A549 (cell line): ENCODE measurements at regions of chr10 and their contacts with region 1.

Region 1: DNA sequence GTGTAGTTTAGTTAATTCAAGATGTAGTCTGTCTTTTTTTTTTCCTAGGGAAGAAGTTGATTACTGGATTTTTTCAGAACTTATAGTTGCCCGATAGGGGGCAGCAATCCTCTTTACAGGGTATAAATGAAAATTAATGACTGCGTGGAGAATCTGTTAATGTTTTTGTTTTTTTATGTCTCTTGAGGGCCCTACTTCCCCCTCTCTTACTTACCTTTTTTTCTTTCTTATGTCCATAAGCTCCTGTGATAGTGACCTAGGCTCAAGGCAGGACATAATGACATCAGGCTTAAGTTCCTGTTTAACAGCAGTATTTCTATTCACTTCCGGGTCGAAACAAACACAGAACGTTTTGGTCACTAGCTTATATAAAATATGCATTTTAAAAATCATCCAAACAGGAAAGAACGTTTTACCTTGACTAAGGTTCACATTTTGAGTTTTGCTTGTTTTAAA is 18.8 kb downstream of the CDC123 start:
- DNase-seq: peak; percentile 40 to 50
- ATAC-seq: peak in 1 of 2 experiments; percentile 47; a peak in 3 of 6 replicates
- H3K4me3 ChIP-seq: no peak overlapping the region
- H3K27ac ChIP-seq: peak overlapping the region in 1 of 2 experiments; percentile 39; a peak in 2 of 6 replicates
- H3K4me1 ChIP-seq: peaks cover 4% of the 10 kb centered on the region; the same call in 2 of the 3 replicates
- CTCF ChIP-seq: peak; percentile 83
- EP300 ChIP-seq: no peak
- POLR2A ChIP-seq: no peak
- RAD21 ChIP-seq: peak; percentile 56 to 65

Region 2: DNA sequence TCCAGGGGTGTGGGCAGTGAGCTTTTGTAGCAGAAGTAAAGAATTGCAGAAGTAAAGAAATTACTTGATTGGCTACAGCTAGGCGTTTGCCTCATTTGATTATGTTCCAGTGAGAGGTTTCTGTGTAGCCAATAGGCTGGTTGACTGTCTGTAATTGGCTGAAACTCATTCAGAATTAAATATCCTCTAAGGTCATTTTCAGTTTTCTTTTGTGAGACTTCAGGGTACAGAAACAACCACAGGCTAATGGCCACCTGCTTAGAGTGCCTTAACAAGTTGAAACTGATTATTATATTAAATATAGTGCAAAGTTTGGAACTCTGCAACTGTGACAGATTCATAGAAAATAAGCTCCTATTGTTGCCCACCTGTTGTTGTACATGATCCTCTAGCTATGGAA is 74.8 kb before region 1 on chr10:
- CTCF ChIA-PET with region 1: no interaction called
- POLR2A ChIA-PET with region 1: no interaction called
- DNase-seq: no peak
- ATAC-seq: no peak
- H3K4me3 ChIP-seq: no peak overlapping the region
- H3K27ac ChIP-seq: no peak overlapping the region
- H3K4me1 ChIP-seq: no peaks in the 10 kb centered on the region
- CTCF ChIP-seq: no peak
- EP300 ChIP-seq: no peak
- POLR2A ChIP-seq: no peak
- RAD21 ChIP-seq: no peak

Region 3: DNA sequence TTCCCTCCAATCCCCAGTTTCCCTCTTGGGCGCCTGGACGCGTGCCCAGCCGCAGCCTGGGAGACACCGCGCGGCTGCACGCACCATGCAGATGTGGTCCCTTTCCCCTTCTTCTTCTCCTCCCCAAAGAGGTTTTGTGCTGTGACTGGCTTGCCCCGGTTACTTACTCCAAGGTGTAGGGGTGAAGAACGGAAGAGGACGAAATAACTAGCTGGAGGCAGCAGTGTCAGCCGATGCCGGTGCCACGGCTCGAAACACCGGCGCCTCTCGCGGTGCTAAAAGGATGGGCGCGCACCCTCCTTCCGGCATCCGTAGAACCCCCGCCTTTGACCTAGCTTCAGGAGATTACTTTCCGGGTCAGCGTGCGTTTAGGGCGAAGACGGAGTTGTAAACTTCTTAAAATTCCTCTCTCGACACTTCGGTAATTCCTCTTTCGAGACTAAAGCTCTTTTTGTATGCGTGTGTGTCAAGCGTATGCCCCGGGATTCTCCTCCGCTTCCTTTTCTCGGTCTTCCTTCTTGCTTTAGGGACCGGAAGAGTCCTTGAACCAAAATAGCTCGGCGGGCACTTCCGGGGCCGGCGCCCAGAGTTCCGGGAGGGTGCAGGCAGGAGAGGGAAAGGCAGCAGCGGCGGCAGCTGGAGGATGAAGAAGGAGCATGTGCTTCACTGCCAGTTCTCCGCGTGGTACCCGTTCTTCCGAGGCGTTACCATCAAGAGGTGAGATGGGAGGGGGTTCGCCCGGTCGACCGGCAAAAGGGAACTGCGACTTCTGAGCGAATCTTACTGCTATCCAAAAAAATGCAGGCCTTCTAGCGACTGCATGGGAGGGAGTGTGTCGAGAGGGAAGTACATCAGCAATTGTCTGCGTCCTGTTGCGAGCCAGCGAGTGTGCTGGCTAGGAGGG is 18.9 kb before region 1 on chr10 and contains the starts of genes CDC123 and NUDT5:
- CTCF ChIA-PET with region 1: interaction called, 61 read pairs
- POLR2A ChIA-PET with region 1: interaction called, 3 read pairs
- DNase-seq: peak; percentile 91 to 93
- ATAC-seq: peak; percentile 97 to 98
- H3K4me3 ChIP-seq: peak within 1 kb of the TSS; percentile 77
- H3K27ac ChIP-seq: peak within 1 kb of the TSS; percentile 87 to 94
- H3K4me1 ChIP-seq: peaks cover 29% of the 10 kb centered on the region
- CTCF ChIP-seq: no peak
- EP300 ChIP-seq: no peak
- POLR2A ChIP-seq: peak; percentile 80
- RAD21 ChIP-seq: no peak; a peak in 1 of 5 replicates
- polyA plus RNA-seq, gene CDC123: 164 and 193 TPM in 2 replicates
- polyA plus RNA-seq, gene NUDT5: 146 and 158 TPM in 2 replicates

Region 4: DNA sequence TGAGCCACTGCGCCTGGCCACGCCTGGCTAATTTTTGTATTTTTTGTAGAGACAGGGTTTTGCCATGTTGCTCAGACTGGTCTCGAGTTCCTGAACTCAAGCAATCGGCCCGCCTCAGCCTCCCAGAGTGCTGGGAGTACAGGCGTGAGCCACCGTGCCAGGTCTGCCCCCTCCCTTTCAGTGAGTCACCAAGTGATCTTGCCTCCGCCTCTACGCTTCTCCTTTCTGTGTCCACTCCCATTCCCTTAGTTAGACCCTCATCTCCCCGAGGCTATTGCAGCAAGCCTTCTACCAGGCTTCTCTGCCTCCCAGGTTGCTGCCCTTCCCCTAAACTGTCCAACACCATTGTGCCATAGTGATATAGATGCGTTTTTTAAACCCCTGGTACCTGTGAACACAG is 14.1 kb after region 1 on chr10:
- CTCF ChIA-PET with region 1: interaction called, 28 read pairs
- POLR2A ChIA-PET with region 1: no interaction called
- DNase-seq: no peak
- ATAC-seq: 0 out of 6 replicates have a peak, but pooled peaks of 1 of the 2 experiments have one; percentile 13
- H3K4me3 ChIP-seq: no peak overlapping the region
- H3K27ac ChIP-seq: no peak overlapping the region
- H3K4me1 ChIP-seq: no peaks in the 10 kb centered on the region; the same call in 2 of the 3 replicates
- CTCF ChIP-seq: no peak
- EP300 ChIP-seq: no peak
- POLR2A ChIP-seq: no peak
- RAD21 ChIP-seq: no peak

Region 5: DNA sequence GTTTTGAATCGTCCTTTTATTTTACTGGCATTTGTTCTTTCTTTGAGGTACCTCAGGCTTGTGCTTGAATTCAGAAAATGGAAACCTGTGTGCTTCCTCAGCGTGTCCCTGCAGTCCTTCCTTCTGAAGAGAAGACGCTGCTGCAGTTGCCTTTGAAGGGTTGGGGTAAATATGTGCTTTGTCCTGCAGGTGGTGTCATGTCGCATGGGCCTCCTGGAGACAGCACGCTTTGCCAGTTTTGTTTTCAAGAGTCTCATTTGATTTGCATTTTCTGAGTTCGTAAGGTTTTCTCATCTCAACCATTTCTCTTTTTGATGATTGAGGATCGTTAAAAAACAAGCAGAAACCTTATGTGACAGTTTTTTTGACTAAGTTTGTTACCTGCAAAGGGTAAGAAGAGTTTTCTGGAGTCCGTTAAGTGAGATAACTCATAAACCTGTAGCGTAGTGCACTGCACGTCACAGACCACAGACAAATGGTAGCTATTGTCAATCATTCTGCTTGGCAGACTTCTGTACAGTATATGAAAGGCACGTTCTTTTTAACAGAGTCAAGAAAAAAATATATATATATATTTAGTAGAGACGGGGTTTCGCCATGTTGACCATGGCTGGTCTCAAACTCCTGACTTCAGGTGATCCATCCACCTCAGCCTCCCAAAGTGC is 38.2 kb after region 1 on chr10:
- CTCF ChIA-PET with region 1: interaction called, 20 read pairs
- POLR2A ChIA-PET with region 1: no interaction called
- DNase-seq: peak; percentile 43 to 65
- ATAC-seq: peak; percentile 82 to 88
- H3K4me3 ChIP-seq: no peak overlapping the region
- H3K27ac ChIP-seq: no peak overlapping the region
- H3K4me1 ChIP-seq: no peaks in the 10 kb centered on the region
- CTCF ChIP-seq: peak; percentile 39; the same call in 2 of the 3 replicates
- EP300 ChIP-seq: no peak
- POLR2A ChIP-seq: no peak
- RAD21 ChIP-seq: peak; percentile 58 to 75

Region 6: GRCh38 chr10:12540341-12540781 is 325.6 kb after region 1 on chr10:
- CTCF ChIA-PET with region 1: no interaction called
- POLR2A ChIA-PET with region 1: no interaction called
- DNase-seq: no peak
- ATAC-seq: no peak
- H3K4me3 ChIP-seq: no peak overlapping the region
- H3K27ac ChIP-seq: no peak overlapping the region
- H3K4me1 ChIP-seq: peaks cover 4% of the 10 kb centered on the region; the same call in 1 of the 3 replicates
- CTCF ChIP-seq: no peak
- EP300 ChIP-seq: no peak
- POLR2A ChIP-seq: no peak
- RAD21 ChIP-seq: no peak

Region 7: GRCh38 chr10:13074561-13075451 is 860.0 kb after region 1 on chr10:
- CTCF ChIA-PET with region 1: interaction called, 14 read pairs
- POLR2A ChIA-PET with region 1: no interaction called
- DNase-seq: peak; percentile 76 to 81
- ATAC-seq: peak; percentile 99 to 100
- H3K4me3 ChIP-seq: no peak overlapping the region
- H3K27ac ChIP-seq: no peak overlapping the region
- H3K4me1 ChIP-seq: no peaks in the 10 kb centered on the region; the same call in 2 of the 3 replicates
- CTCF ChIP-seq: peak; percentile 91
- EP300 ChIP-seq: no peak
- POLR2A ChIP-seq: no peak
- RAD21 ChIP-seq: peak; percentile 95 to 96